Psoas muscle (tissue), 8 donors: ENCODE measurements at regions of chr2 and their contacts with region 1.

Region 1: DNA sequence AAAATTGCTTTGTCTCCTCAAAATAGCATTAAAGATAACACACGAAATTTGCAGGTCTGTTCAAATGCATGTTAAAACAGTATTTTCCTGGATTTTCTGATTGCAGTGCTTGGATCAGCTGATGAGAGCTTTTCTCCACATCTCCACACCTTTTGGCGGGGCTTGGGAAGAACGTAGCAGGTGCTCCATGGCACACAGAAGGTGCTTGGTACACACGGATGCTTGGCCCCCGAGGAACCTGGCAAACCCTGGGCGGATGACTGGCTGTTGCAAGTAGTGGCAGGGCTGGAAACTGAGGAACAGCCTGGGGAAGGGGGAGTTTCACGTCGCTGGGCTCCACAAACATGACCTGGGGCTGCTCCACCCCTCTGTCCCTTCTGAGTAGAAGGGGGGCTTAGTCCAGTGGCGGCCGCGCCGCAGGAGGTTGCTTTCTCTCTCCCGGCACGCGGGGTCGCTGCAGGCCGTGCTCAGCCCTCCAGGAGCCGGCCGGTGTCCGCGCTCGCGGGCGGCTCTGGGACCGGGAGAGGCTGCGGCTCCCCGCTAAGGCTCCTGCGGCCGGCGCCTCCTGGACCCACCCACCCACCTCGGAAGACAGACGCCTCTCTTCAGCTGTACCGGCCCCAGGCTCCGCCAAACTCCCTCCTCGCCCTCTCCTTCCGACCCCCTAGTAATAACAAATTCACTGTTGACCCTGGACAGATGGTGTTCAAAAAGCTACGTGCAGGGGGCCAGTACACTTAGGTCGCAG is 69.3 kb downstream of the MARCO start:
- DNase-seq: peak; percentile 47 to 66
- ATAC-seq: peak; percentile 89 to 95 (median 92)
- H3K4me3 ChIP-seq: peak overlapping the region; percentile 32
- H3K27ac ChIP-seq: no peak overlapping the region
- H3K4me1 ChIP-seq: no peaks in the 10 kb centered on the region
- H3K27me3 ChIP-seq: peaks cover 0 to 13% (median 2%) of the 10 kb centered on the region in 3 donors
- CTCF ChIP-seq: peak; percentile 62

Region 2: DNA sequence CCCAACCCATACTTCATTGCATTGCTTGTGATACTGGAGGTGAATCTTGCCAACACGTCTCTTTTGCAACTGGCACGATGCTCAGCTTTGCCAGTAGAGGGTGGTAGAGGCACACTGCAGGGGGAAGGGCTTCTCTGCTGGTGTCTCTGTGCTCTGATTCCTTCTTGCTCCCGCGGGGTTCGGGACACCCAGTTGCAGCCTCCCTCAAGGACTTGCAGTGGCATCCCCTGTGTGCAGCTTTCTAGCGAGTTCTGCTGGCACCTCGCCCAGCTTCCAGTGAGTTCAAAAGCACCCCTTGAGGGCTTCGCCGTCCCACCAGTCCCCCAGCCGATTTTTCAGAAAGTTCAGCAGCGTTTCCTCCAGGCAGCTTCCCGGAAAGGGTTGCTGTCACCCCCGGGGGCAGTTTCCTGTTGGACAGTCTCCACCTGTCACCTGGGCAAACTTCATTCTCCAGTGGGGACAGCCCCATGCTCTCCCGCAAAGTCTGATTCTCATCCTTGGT is 128.6 kb before region 1 on chr2:
- intact Hi-C with region 1: loop called in 1 of 2 experiments (anchors 5 kb)
- DNase-seq: peak; percentile 39 to 70
- ATAC-seq: peak; percentile 77 to 92 (median 84)
- H3K4me3 ChIP-seq: peak overlapping the region; percentile 27
- H3K27ac ChIP-seq: no peak overlapping the region
- H3K4me1 ChIP-seq: no peaks in the 10 kb centered on the region
- H3K27me3 ChIP-seq: peaks cover 0 to 13% (median 3%) of the 10 kb centered on the region in 3 donors
- CTCF ChIP-seq: peak; percentile 72

Region 3: GRCh38 chr2:119264781-119265692 is 253.7 kb after region 1 on chr2:
- intact Hi-C with region 1: loop called in 1 of 2 experiments (anchors 10 kb)
- DNase-seq: peak; percentile 41 to 68
- ATAC-seq: peak; percentile 93 to 98 (median 94)
- H3K4me3 ChIP-seq: no peak overlapping the region
- H3K27ac ChIP-seq: no peak overlapping the region
- H3K4me1 ChIP-seq: peaks cover 5% of the 10 kb centered on the region
- H3K27me3 ChIP-seq: no peaks in the 10 kb centered on the region
- CTCF ChIP-seq: peak; percentile 80

Region 4: GRCh38 chr2:119290859-119291587 is 279.7 kb after region 1 on chr2:
- intact Hi-C with region 1: loop called (anchors 5 to 10 kb)
- DNase-seq: peak; percentile 74 to 86
- ATAC-seq: peak; percentile 83 to 85 (median 83)
- H3K4me3 ChIP-seq: no peak overlapping the region
- H3K27ac ChIP-seq: no peak overlapping the region
- H3K4me1 ChIP-seq: peaks cover 12% of the 10 kb centered on the region
- H3K27me3 ChIP-seq: no peaks in the 10 kb centered on the region
- CTCF ChIP-seq: peak; percentile 85

Region 5: DNA sequence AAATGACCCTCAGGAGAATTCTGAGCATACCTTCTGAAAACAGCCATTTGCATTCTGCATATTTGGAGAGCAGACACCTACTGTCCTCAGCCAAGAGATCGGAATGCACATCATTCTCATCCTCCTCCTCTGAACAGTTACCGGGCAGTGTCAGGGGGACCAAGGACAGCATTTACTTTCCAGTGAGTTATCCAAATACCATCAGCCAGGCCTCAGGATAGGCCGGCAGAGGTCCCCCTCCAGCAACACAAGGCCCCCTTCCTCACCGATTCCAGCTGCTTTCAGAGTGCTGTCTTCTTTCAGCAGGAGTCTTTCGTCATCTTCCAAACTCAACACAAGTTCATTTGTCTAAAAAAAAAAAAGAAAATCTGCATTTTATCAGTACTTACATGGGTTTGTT is 300.0 kb after region 1 on chr2:
- intact Hi-C with region 1: loop called in 1 of 2 experiments (anchors 5 kb)
- DNase-seq: no peak
- ATAC-seq: no peak
- H3K4me3 ChIP-seq: no peak overlapping the region
- H3K27ac ChIP-seq: no peak overlapping the region
- H3K4me1 ChIP-seq: peaks cover 11% of the 10 kb centered on the region
- H3K27me3 ChIP-seq: no peaks in the 10 kb centered on the region
- CTCF ChIP-seq: no peak

Region 6: GRCh38 chr2:119476301-119477021 is 465.1 kb after region 1 on chr2:
- intact Hi-C with region 1: loop called in 1 of 2 experiments (anchors 10 kb)
- DNase-seq: peak; percentile 55 to 76
- ATAC-seq: peak; percentile 87 to 94 (median 90)
- H3K4me3 ChIP-seq: no peak overlapping the region
- H3K27ac ChIP-seq: no peak overlapping the region
- H3K4me1 ChIP-seq: peaks cover 8% of the 10 kb centered on the region
- H3K27me3 ChIP-seq: no peaks in the 10 kb centered on the region
- CTCF ChIP-seq: peak; percentile 95